Natural killer cell (primary cell): ENCODE measurements at regions of chrX and their contacts with region 1.

Region 1: GRCh38 chrX:136028251-136028984 is 43.2 kb downstream of the SLC9A6 start:
- DNase-seq: peak in 1 of 2 donors; percentile 70
- ATAC-seq: peak; percentile 58 to 71 (median 67)
- H3K4me3 ChIP-seq: no peak overlapping the region
- H3K4me3 Mint-ChIP-seq: no peak overlapping the region
- H3K27ac ChIP-seq: no peak overlapping the region
- H3K27ac Mint-ChIP-seq: no peak overlapping the region
- H3K4me1 ChIP-seq: no peaks in the 10 kb centered on the region
- H3K4me1 Mint-ChIP-seq: no peaks in the 10 kb centered on the region
- H3K27me3 ChIP-seq: no peaks in the 10 kb centered on the region
- H3K27me3 Mint-ChIP-seq: no peaks in the 10 kb centered on the region
- CTCF ChIP-seq: peak; percentile 46

Region 2: DNA sequence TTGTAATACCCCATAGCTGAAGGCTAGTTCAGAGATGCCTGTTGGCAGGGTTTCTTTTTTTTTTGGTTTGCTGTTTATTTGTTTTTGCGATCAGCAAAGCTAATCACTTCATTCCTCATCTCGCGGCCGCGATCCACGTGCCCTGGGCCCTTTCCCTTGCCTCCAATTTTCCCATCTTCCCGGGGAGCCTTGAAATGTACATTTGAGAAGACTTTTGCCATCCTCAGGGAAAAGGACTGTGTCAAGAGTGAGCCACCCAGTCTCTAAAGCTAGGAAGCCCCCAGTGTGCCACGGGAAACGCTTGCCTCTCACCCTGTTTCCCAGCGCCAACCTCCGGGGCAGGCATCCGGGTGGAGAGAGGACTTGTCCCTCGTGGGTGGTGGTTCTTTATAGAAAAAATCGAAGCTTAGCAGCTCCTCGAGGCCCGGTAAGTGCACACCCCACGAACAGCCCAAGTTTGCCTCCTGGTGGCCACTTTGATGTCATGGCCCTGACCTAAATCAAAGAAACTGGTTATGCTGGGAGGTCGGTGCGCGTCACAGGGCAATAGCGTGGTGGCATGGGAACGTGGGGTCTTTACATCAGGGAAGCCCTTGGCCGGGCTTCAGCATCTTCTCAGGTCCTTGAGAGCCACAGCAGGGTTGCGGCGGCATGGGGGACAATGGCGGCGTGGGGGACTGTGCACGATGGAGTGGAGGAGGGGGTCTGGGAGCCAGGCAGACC is 180.8 kb after region 1 on chrX:
- intact Hi-C with region 1: loop called (anchors 1 kb)
- DNase-seq: peak; percentile 16 to 68
- ATAC-seq: peak in 2 of 3 donors; percentile 63
- H3K4me3 ChIP-seq: no peak overlapping the region
- H3K4me3 Mint-ChIP-seq: no peak overlapping the region
- H3K27ac ChIP-seq: no peak overlapping the region
- H3K27ac Mint-ChIP-seq: no peak overlapping the region
- H3K4me1 ChIP-seq: peaks cover 23% of the 10 kb centered on the region
- H3K4me1 Mint-ChIP-seq: peaks cover 9 to 12% of the 10 kb centered on the region in 2 donors
- H3K27me3 ChIP-seq: no peaks in the 10 kb centered on the region
- H3K27me3 Mint-ChIP-seq: no peaks in the 10 kb centered on the region
- CTCF ChIP-seq: peak; percentile 24

Region 3: DNA sequence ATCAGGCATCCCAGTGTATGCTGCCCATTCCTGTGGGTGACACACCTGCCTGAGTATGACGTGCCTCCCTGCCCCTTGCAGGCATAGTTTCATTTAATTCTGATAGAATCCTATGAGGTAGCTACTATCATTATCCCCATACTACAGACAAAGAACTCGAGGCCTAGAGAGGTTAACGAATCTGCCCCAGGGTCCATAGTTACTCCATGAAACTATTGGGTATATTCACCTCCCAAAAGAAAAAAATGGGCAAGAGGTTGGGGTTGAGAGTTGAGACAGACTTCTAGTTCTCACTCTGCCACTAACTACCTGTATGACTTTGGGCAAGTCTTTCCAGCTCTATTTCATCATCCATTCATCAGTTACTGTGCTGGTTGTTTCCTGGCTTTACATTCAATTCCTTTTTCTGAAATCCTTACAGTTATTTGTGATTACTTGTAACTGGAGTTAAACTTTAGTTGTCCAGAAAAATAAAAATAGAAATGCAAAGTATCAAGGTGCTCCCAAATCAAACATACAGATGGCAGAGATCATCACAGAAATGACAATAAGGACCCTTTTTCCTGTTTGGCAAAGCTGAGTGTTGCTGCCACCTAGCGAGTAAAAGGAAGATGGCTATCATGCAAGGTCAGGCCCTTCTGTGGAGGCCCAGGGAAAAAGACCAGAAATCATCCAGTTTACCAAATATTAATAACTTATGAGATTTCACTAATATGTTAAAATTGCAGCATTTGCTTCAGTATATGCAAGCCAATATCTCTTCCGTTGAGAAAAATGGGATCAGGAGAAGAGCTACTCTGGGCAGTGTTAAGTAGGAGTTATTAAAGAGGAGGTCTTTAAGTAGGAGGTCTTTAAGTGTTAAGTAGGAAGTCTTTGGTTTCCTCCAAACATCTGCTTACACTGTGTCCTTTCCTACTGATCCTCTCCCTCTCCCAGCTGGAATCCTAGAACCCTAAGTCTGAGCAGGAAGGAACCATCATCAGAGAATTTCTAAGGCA is 239.9 kb after region 1 on chrX:
- intact Hi-C with region 1: loop called (anchors 1 kb)
- DNase-seq: peak in 1 of 2 donors; percentile 72
- ATAC-seq: peak in 2 of 3 donors; percentile 44 to 78
- H3K4me3 ChIP-seq: no peak overlapping the region
- H3K4me3 Mint-ChIP-seq: no peak overlapping the region
- H3K27ac ChIP-seq: no peak overlapping the region
- H3K27ac Mint-ChIP-seq: no peak overlapping the region
- H3K4me1 ChIP-seq: no peaks in the 10 kb centered on the region
- H3K4me1 Mint-ChIP-seq: no peaks in the 10 kb centered on the region
- H3K27me3 ChIP-seq: no peaks in the 10 kb centered on the region
- H3K27me3 Mint-ChIP-seq: no peaks in the 10 kb centered on the region
- CTCF ChIP-seq: peak; percentile 65